MCF 10A (cell line): ENCODE measurements at regions of chr1 and their contacts with region 1.

Region 1: DNA sequence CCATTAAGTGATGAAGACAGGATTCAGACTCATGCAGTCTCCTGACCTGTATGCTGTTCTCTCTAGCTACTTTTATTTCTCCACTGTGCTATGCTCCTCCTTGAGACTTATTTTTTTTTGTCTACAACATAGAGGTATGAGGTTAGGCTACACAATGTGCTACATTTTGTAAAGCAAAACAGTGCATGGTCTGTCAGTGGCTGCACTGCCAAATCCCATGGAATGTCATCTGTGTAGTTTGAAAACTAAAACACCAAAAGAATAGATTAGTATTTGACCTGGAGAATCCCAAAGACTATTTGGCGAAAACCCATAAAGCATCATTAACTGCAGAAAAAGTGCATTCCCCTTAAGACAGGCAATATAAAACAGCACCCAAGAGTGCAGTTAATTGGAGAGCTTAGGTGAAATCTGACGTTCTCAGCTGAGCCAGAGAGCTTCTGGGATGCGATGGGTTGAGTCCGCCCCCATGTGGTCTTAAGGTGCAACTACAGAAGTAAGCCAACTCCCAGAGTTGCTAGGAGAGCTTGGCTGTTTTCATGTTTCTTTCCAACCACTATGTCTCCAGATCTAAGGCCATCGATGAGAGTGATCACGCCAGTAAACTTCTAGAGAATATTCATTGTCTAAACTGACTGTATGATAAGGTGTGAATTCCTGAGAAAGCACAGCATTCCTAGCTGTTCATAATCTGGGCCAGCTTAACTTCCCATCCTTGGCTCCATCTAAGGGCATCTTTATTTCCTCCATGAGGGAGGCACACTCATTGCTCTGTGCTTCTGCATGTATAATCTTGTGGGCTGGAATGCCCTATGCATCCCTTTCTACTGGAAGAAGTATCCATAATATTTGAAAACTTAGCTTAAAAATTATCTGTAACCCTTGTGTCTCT is 20.7 kb upstream of the CYP2J2 start:
- DNase-seq: peak; percentile 76
- H3K4me3 Mint-ChIP-seq: no peak overlapping the region
- H3K27ac Mint-ChIP-seq: no peak overlapping the region
- H3K4me1 Mint-ChIP-seq: no peaks in the 10 kb centered on the region
- H3K27me3 Mint-ChIP-seq: peaks cover 14% of the 10 kb centered on the region
- CTCF ChIP-seq: peak; percentile 83

Region 2: GRCh38 chr1:58739856-58740466 is 1207.3 kb before region 1 on chr1:
- CTCF ChIA-PET with region 1: interaction called, 4 read pairs
- POLR2A ChIA-PET with region 1: no interaction called
- intact Hi-C with region 1: loop called (anchors 10 kb)
- DNase-seq: peak; percentile 69
- H3K4me3 Mint-ChIP-seq: no peak overlapping the region
- H3K27ac Mint-ChIP-seq: no peak overlapping the region
- H3K4me1 Mint-ChIP-seq: peaks cover 6% of the 10 kb centered on the region
- H3K27me3 Mint-ChIP-seq: no peaks in the 10 kb centered on the region
- CTCF ChIP-seq: peak; percentile 54

Region 3: GRCh38 chr1:59879574-59879973 is 67.7 kb before region 1 on chr1:
- CTCF ChIA-PET with region 1: interaction called, 191 read pairs
- POLR2A ChIA-PET with region 1: interaction called, 3 read pairs
- intact Hi-C with region 1: loop called (anchors 1 kb)
- DNase-seq: peak; percentile 71
- H3K4me3 Mint-ChIP-seq: no peak overlapping the region
- H3K27ac Mint-ChIP-seq: no peak overlapping the region
- H3K4me1 Mint-ChIP-seq: no peaks in the 10 kb centered on the region
- H3K27me3 Mint-ChIP-seq: peaks cover 7% of the 10 kb centered on the region
- CTCF ChIP-seq: no peak

Region 4: GRCh38 chr1:59892841-59893811 is 54.2 kb before region 1 on chr1:
- CTCF ChIA-PET with region 1: interaction called, 29 read pairs
- POLR2A ChIA-PET with region 1: no interaction called
- intact Hi-C with region 1: no loop called
- DNase-seq: no peak
- H3K4me3 Mint-ChIP-seq: no peak overlapping the region
- H3K27ac Mint-ChIP-seq: no peak overlapping the region
- H3K4me1 Mint-ChIP-seq: no peaks in the 10 kb centered on the region
- H3K27me3 Mint-ChIP-seq: no peaks in the 10 kb centered on the region
- CTCF ChIP-seq: no peak

Region 5: DNA sequence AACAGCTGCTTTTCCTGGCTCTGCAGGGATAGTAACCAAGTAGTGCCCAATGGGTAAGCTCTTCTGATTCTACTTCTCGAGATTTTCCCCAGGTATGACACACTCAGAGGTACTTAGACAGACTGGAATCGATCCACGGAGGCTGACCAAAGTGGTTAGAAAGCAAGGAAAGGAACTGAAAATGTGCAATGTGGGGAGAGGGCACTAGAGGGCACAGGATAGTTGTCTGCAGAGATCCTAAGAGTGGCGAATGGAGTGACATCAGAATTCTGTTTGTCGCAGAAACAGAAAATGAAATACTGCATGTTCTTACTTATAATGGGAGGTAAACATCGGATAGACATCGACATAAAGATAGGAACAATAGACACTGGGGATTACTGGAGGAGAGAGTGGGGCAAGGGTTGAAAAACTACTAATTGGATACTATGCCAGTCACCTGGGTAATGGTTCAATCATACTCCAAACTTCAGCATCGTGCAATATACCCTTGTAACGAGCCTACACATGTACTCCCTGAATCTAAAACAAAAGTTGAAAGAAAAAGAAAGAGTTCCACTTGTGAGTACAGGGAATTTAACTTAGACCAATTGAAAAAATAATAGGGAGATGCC is 44.0 kb before region 1 on chr1:
- CTCF ChIA-PET with region 1: interaction called, 66 read pairs
- POLR2A ChIA-PET with region 1: interaction called, 3 read pairs
- intact Hi-C with region 1: loop called (anchors 1 kb)
- DNase-seq: peak; percentile 44
- H3K4me3 Mint-ChIP-seq: no peak overlapping the region
- H3K27ac Mint-ChIP-seq: no peak overlapping the region
- H3K4me1 Mint-ChIP-seq: peaks cover 6% of the 10 kb centered on the region
- H3K27me3 Mint-ChIP-seq: peaks cover 13% of the 10 kb centered on the region
- CTCF ChIP-seq: peak; percentile 45

Region 6: GRCh38 chr1:59908682-59909081 is 38.6 kb before region 1 on chr1:
- CTCF ChIA-PET with region 1: interaction called, 66 read pairs
- POLR2A ChIA-PET with region 1: no interaction called
- intact Hi-C with region 1: loop called (anchors 1 kb)
- DNase-seq: no peak
- H3K4me3 Mint-ChIP-seq: no peak overlapping the region
- H3K27ac Mint-ChIP-seq: no peak overlapping the region
- H3K4me1 Mint-ChIP-seq: no peaks in the 10 kb centered on the region
- H3K27me3 Mint-ChIP-seq: no peaks in the 10 kb centered on the region
- CTCF ChIP-seq: no peak

Region 7: GRCh38 chr1:59926381-59927123 is 20.7 kb before region 1 on chr1 and contains the start of gene CYP2J2:
- CTCF ChIA-PET with region 1: interaction called, 11 read pairs
- POLR2A ChIA-PET with region 1: interaction called, 3 read pairs
- intact Hi-C with region 1: no loop called
- DNase-seq: peak; percentile 59
- H3K4me3 Mint-ChIP-seq: peak within 1 kb of the TSS; percentile 71
- H3K27ac Mint-ChIP-seq: no peak within 1 kb of the TSS
- H3K4me1 Mint-ChIP-seq: no peaks in the 10 kb centered on the region
- H3K27me3 Mint-ChIP-seq: peaks cover 57% of the 10 kb centered on the region
- CTCF ChIP-seq: no peak
- total RNA-seq, gene CYP2J2: 0.25 and 0.42 TPM in 2 replicates

Region 8: GRCh38 chr1:60132985-60133675 is 185.8 kb after region 1 on chr1:
- CTCF ChIA-PET with region 1: no interaction called
- POLR2A ChIA-PET with region 1: no interaction called
- intact Hi-C with region 1: no loop called
- DNase-seq: no peak
- H3K4me3 Mint-ChIP-seq: no peak overlapping the region
- H3K27ac Mint-ChIP-seq: no peak overlapping the region
- H3K4me1 Mint-ChIP-seq: peaks cover 5% of the 10 kb centered on the region
- H3K27me3 Mint-ChIP-seq: peaks cover 44% of the 10 kb centered on the region
- CTCF ChIP-seq: no peak